MCF 10A (cell line): ENCODE measurements at regions of chr11 and their contacts with region 1.

Region 1: GRCh38 chr11:67401495-67402191 is at the start of gene PPP1CA:
- DNase-seq: peak; percentile 84
- H3K4me3 Mint-ChIP-seq: peak within 1 kb of the TSS; percentile 71
- H3K27ac Mint-ChIP-seq: no peak within 1 kb of the TSS
- H3K4me1 Mint-ChIP-seq: peaks cover 9% of the 10 kb centered on the region
- H3K27me3 Mint-ChIP-seq: no peaks in the 10 kb centered on the region
- CTCF ChIP-seq: peak; percentile 35
- total RNA-seq, gene PPP1CA: 123 and 143 TPM in 2 replicates

Region 2: DNA sequence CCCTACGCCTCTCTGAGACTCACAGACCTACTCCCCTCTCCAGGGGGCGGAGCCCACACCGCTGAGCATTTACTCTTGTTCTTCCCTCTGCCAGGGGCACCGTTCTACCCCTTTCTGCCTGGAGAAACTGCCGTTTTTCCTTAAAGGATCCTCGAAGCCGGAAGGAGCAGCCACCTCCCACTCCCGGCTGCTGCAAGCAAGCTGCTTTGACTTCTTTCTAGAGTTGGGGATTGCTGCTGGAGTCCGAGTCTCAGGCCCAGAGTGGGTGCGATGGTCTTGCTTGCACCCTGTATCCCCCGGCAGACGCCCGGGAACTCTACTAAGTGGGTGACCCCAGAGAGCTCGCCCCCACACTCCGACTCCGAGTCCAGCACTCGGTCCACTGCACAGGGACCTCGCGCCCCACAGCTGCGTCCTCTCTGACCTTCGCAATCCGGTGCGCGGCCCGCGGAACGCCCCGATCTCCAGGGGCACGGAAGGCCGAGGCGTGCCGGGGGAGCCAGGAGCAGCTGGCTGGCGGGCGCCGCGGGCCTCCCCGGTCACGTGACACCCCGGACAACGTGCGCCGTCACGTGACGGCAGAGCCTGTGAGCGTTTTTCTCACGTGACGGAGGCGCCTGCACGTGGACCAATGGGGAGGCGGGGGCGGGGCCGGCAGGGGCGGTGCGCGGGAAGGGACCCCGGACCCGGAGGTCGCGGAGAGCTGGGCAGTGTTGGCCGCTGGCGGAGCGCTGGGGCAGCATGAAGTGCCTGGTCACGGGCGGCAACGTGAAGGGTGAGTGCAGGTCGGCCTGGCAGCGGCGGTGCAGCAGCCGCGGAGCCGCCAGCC is 10.1 kb before region 1 on chr11 and contains the start of gene RAD9A:
- CTCF ChIA-PET with region 1: interaction called, 11 read pairs
- POLR2A ChIA-PET with region 1: interaction called, 61 read pairs
- intact Hi-C with region 1: no loop called
- DNase-seq: peak; percentile 92
- H3K4me3 Mint-ChIP-seq: peak within 1 kb of the TSS; percentile 85
- H3K27ac Mint-ChIP-seq: peak within 1 kb of the TSS; percentile 76
- H3K4me1 Mint-ChIP-seq: peaks cover 17% of the 10 kb centered on the region
- H3K27me3 Mint-ChIP-seq: no peaks in the 10 kb centered on the region
- CTCF ChIP-seq: no peak
- total RNA-seq, gene RAD9A: 9.9 and 18.3 TPM in 2 replicates

Region 3: GRCh38 chr11:67420646-67421420 is 19.2 kb after region 1 on chr11:
- CTCF ChIA-PET with region 1: interaction called, 3 read pairs
- POLR2A ChIA-PET with region 1: interaction called, 27 read pairs
- intact Hi-C with region 1: no loop called
- DNase-seq: peak; percentile 94
- H3K4me3 Mint-ChIP-seq: peak overlapping the region; percentile 74
- H3K27ac Mint-ChIP-seq: no peak overlapping the region
- H3K4me1 Mint-ChIP-seq: peaks cover 20% of the 10 kb centered on the region
- H3K27me3 Mint-ChIP-seq: no peaks in the 10 kb centered on the region
- CTCF ChIP-seq: no peak

Region 4: DNA sequence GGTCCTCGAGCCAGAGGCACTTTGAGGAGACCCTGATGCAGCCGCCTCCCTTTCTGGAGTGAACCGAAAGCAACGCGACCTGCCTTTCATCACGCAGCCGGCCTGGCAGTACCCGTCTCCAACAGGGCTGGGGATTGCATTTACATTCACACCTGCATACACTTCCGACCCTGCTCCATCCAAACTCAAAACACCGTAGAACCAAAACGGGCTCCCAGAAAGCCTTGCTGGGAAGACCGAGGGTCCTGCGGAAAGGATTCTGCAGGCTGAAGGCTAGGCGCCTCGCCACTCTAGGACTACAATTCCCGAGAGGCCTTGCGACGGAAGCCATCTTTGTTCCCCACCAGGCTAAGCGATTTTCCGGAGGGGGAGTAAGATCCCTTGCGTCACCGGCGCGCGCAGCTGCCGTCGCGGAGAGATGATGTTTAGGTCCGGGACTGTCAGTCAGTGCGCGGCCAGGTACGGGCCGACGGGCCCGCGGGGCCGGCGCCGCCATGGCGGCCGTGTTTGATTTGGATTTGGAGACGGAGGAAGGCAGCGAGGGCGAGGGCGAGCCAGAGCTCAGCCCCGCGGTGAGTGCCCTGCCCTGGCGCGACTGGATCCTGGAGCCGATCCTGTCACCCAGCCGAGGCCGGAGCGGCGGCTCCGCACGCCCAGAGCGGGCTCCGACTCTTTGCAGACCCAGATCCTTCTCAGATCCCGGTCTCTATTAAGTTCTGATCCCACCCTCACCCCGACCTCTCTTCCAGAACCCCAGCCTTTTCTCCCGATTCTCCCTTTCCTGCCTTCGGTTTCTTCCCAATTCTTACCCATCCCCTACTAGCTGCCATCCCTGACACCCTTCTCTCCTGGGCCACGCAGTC is 26.6 kb after region 1 on chr11 and contains the start of gene RPS6KB2:
- CTCF ChIA-PET with region 1: interaction called, 5 read pairs
- POLR2A ChIA-PET with region 1: interaction called, 32 read pairs
- intact Hi-C with region 1: no loop called
- DNase-seq: peak; percentile 97
- H3K4me3 Mint-ChIP-seq: peak within 1 kb of the TSS; percentile 96
- H3K27ac Mint-ChIP-seq: peak within 1 kb of the TSS; percentile 92
- H3K4me1 Mint-ChIP-seq: peaks cover under 1% of the 10 kb centered on the region
- H3K27me3 Mint-ChIP-seq: no peaks in the 10 kb centered on the region
- CTCF ChIP-seq: no peak
- total RNA-seq, gene RPS6KB2: 49.8 and 60.1 TPM in 2 replicates